GM10248 (cell line): ENCODE measurements at regions of chr6 and their contacts with region 1.

Region 1: DNA sequence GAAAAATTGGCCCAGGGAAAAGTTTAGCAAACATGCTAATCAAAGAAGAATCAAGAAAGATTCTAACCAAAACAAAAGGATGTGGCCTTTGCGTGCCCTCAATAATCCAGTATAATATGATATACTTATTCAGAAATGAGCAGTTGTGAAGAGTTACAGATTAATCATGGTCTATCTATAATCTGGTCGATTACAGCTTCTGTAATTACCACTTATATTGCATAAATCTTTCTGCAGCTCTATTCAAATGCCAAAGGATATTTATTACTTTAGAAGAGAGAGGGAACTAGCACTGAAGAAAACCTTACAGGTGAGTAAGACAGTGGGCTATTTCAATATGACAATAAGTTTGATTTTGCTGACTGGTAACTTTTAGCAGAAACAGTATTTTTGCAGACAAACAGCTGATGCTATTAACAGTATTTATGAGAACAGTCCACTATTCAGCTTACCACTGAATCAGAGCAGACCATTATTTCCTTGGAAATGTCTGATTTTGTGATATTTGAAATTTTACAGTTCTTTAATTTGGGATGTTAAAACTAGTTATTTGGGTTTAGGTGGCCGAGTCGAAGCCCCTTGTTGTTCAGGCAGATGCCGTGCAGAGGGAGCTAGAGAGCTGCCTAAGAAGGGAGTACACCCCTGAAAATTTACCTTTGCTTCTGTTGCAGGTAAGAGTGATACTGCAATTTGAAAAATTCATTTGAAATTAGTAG is 92.2 kb downstream of the CEP57L1 start:
- DNase-seq: peak; percentile 43
- CTCF ChIP-seq: peak; percentile 85

Region 2: DNA sequence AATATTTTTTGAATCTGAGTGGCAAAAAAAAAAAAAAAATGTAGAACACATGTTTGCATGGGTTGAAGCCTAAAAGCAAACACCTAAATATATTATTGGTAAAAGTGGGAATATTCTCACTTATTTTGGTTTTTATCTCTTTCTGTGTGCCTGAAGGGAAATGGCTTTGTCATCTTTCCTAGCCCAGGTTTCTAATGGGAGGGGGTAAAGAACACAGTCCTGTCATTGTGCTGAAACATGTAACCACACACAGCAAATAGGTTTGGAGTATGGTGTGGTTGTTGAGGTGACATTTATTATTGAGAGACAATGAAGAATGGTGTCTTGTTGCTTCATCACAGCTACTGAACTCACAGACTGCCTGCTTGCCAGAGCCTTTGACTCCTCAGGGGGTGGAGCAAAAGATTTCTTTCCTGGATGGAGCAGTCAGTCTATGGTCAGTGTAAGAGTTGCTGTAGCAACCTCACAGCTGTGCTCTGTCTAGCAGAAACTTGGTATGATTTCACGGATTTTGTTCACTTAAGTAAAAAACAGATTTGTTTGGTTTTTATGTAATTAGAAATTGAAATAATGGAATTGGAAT is 22.1 kb before region 1 on chr6:
- CTCF ChIA-PET with region 1: interaction called, 15 read pairs
- POLR2A ChIA-PET with region 1: no interaction called
- DNase-seq: no peak
- CTCF ChIP-seq: no peak

Region 3: GRCh38 chr6:109202409-109203284 is 15.1 kb after region 1 on chr6:
- CTCF ChIA-PET with region 1: interaction called, 19 read pairs
- POLR2A ChIA-PET with region 1: no interaction called
- DNase-seq: no peak
- CTCF ChIP-seq: no peak

Region 4: DNA sequence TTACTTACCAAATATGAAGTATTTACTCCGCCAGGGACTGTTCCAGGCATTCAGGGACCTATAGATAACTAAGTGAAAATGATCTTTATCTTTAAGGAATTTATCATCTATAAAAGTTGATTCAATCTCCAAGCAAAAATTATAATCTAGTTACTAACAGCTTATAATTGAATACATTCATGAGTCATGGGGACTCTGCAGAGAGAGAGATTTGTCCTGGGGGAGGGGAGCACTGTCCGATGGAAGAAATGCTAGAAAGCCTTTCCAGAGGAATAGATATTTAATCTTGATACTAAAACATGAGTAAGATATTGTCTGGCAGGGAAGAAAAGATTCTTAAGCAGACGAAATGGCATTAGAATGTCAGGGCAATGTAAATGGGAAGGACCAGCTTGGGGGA is 55.4 kb after region 1 on chr6:
- CTCF ChIA-PET with region 1: no interaction called
- POLR2A ChIA-PET with region 1: no interaction called
- DNase-seq: no peak
- CTCF ChIP-seq: no peak

Region 5: GRCh38 chr6:109322825-109323224 is 135.3 kb after region 1 on chr6:
- CTCF ChIA-PET with region 1: no interaction called
- POLR2A ChIA-PET with region 1: no interaction called
- DNase-seq: no peak
- CTCF ChIP-seq: no peak

Region 6: GRCh38 chr6:109397020-109397419 is 209.5 kb after region 1 on chr6:
- CTCF ChIA-PET with region 1: interaction called, 11 read pairs
- POLR2A ChIA-PET with region 1: no interaction called
- DNase-seq: no peak
- CTCF ChIP-seq: no peak

Region 7: DNA sequence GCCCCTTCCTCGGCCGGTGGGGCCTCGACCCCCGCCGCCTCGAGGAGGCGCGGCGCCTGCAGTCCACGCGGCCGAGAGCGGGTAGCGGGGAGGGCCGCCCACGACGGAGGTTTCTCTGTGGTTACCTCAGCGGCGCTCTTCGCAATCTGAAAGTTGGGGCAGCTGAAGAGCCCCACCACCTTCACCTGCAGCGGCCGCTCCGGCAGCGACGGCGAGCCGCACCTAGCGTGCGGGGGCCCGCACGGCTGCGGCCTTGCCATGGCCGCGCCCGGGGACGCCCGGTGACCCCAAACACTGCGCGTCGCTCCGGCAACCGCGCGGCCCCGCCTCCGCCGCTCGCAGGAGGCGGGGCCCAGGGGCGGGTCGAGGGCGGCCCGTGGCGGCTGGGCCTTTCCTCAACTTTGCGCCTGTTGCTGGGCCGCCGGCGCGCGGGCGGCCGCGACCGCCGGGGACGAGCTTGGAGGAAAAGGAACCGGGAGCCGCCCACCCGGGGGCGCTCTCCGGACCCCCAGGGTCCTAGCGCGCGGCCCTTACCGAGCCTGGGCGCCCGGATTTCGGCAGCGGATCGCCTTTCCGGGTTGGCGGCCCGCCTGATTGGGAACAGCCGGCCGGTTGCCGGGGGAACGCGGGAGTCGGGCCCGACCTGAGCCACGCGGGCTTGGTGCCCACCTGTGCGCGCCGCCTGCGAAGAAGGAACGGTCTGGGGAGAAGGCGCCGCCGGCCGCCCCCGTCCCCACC is 252.9 kb after region 1 on chr6 and contains the starts of genes PPIL6 and SMPD2:
- CTCF ChIA-PET with region 1: interaction called, 10 read pairs
- POLR2A ChIA-PET with region 1: no interaction called
- DNase-seq: peak; percentile 95
- CTCF ChIP-seq: peak; percentile 15

Region 8: GRCh38 chr6:109834131-109834530 is 646.6 kb after region 1 on chr6:
- CTCF ChIA-PET with region 1: no interaction called
- POLR2A ChIA-PET with region 1: no interaction called
- DNase-seq: no peak
- CTCF ChIP-seq: no peak